Calu3 (cell line): ENCODE measurements at regions of chr17 and their contacts with region 1.

Region 1: GRCh38 chr17:12256380-12256995 is 235.8 kb downstream of the MAP2K4 start:
- DNase-seq: peak; percentile 40
- H3K4me3 Mint-ChIP-seq: no peak overlapping the region
- H3K27ac Mint-ChIP-seq: no peak overlapping the region
- H3K4me1 Mint-ChIP-seq: no peaks in the 10 kb centered on the region
- H3K27me3 Mint-ChIP-seq: no peaks in the 10 kb centered on the region
- CTCF ChIP-seq: peak; percentile 47

Region 2: GRCh38 chr17:12209632-12210191 is 46.8 kb before region 1 on chr17:
- CTCF ChIA-PET with region 1: no interaction called
- intact Hi-C with region 1: no loop called
- DNase-seq: no peak
- H3K4me3 Mint-ChIP-seq: no peak overlapping the region
- H3K27ac Mint-ChIP-seq: no peak overlapping the region
- H3K4me1 Mint-ChIP-seq: no peaks in the 10 kb centered on the region
- H3K27me3 Mint-ChIP-seq: no peaks in the 10 kb centered on the region
- CTCF ChIP-seq: no peak

Region 3: GRCh38 chr17:12667299-12667958 is 410.9 kb after region 1 on chr17:
- CTCF ChIA-PET with region 1: interaction called, 5 read pairs
- intact Hi-C with region 1: loop called (anchors 1 kb)
- DNase-seq: peak; percentile 38
- H3K4me3 Mint-ChIP-seq: no peak overlapping the region
- H3K27ac Mint-ChIP-seq: no peak overlapping the region
- H3K4me1 Mint-ChIP-seq: no peaks in the 10 kb centered on the region
- H3K27me3 Mint-ChIP-seq: peaks cover 39% of the 10 kb centered on the region
- CTCF ChIP-seq: no peak

Region 4: GRCh38 chr17:12744298-12744697 is 487.8 kb after region 1 on chr17:
- CTCF ChIA-PET with region 1: interaction called, 3 read pairs
- intact Hi-C with region 1: loop called (anchors 1 kb)
- DNase-seq: peak; percentile 39
- H3K4me3 Mint-ChIP-seq: no peak overlapping the region
- H3K27ac Mint-ChIP-seq: peak overlapping the region; percentile 39
- H3K4me1 Mint-ChIP-seq: peaks cover 48% of the 10 kb centered on the region
- H3K27me3 Mint-ChIP-seq: no peaks in the 10 kb centered on the region
- CTCF ChIP-seq: no peak

Region 5: GRCh38 chr17:13002766-13003451 is 746.4 kb after region 1 on chr17:
- CTCF ChIA-PET with region 1: no interaction called
- intact Hi-C with region 1: loop called (anchors 1 kb)
- DNase-seq: peak; percentile 60
- H3K4me3 Mint-ChIP-seq: no peak overlapping the region
- H3K27ac Mint-ChIP-seq: no peak overlapping the region
- H3K4me1 Mint-ChIP-seq: no peaks in the 10 kb centered on the region
- H3K27me3 Mint-ChIP-seq: no peaks in the 10 kb centered on the region
- CTCF ChIP-seq: peak; percentile 67